Panc1 (cell line): ENCODE measurements at regions of chr5 and their contacts with region 1.

Region 1: DNA sequence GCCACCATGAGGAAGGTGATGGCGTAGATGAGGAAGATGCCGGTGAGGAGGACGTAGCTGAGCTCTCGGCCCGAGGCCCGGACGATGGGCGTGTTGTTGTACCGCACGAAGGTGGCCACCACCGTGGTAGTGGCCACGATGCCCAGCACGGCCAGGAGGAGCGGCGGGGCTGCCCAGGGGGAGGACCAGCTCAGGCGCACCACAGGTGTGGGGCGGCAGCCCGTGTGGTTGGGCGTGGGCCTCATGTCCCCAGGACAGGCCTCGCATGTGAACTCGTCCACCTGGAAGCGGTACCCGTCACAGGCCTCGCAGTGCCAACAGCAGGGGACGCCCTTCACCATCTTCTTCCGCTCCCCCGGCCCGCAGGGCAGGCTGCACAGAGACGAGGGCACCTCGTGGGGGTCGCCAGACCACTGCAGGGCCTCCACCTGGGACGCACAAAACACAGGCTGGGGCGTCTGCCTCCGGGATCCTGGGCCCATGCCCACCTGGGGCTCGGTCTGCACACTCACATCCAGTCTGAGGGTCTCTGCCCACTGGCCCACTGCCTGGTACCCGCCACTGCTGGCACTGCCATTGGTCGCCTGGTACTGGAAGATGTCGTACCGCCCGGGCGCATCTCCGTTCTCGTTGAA is 8.7 kb downstream of the GRM6 start:
- DNase-seq: no peak
- ATAC-seq: no peak
- H3K4me3 ChIP-seq: no peak overlapping the region
- H3K27ac ChIP-seq: no peak overlapping the region
- H3K4me1 ChIP-seq: no peaks in the 10 kb centered on the region
- H3K27me3 ChIP-seq: no peaks in the 10 kb centered on the region
- CTCF ChIP-seq: no peak

Region 2: DNA sequence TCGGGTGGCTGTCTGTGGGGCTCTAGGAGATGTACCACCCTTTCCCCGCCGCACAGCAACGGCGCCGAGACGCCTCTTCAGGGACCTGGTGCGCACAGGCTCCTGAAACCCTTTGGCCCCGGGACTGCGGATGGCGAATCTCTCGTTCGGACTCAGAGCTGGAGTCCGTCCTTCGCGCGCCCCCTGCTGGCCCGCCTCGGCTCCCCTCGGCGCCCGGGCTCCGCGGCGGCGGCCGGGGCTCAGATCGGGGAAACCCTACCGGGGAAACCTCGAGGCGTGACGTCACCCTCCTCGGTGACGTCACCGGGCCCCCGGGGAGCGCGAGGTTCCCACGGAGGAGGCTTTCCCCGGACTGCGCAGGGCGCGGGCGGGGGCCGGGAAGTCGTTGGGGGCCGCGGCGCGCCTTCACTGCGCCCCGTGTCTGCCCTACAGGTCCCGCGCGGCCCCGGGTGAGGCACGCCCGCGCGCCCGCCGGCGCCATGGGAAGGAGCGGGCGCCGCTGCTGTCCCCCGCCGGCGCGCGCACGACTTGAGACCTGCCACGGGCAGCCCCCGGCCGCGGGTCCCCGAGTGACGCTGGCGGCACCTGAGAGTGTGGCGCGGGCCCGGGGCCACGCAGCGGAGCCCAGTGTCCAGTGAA is 1531.9 kb before region 1 on chr5:
- CTCF ChIA-PET with region 1: no interaction called
- POLR2A ChIA-PET with region 1: interaction called, 15 read pairs
- in situ Hi-C with region 1: no loop called
- intact Hi-C with region 1: no loop called
- DNase-seq: peak; percentile 57
- ATAC-seq: peak; percentile 68
- H3K4me3 ChIP-seq: peak overlapping the region; percentile 50 to 61
- H3K27ac ChIP-seq: peak overlapping the region; percentile 78; the same call in 1 of the 2 replicates
- H3K4me1 ChIP-seq: peaks cover 41% of the 10 kb centered on the region
- H3K27me3 ChIP-seq: no peaks in the 10 kb centered on the region
- CTCF ChIP-seq: peak; percentile 95

Region 3: DNA sequence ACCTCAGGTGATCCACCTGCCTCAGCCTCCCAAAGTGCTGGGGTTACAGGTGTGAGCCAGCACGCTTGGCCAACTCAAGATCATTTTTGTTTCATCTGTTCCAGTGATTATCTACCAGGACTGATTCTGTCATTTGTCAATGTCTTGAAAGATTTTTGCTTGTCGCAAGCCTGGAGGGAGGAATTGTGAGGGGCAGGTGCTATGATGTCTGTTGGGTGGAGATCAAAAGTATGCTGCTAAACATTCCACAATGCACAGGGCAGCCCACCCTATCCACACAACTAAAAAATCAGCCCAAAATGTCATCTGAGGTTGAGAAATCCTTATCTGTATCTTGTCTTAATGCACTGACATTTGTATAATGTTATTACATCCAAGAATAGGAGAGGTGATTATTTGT is 105.4 kb before region 1 on chr5:
- CTCF ChIA-PET with region 1: interaction called, 10 read pairs
- POLR2A ChIA-PET with region 1: no interaction called
- in situ Hi-C with region 1: no loop called
- intact Hi-C with region 1: no loop called
- DNase-seq: no peak
- ATAC-seq: no peak
- H3K4me3 ChIP-seq: no peak overlapping the region
- H3K27ac ChIP-seq: no peak overlapping the region
- H3K4me1 ChIP-seq: no peaks in the 10 kb centered on the region
- H3K27me3 ChIP-seq: no peaks in the 10 kb centered on the region
- CTCF ChIP-seq: no peak

Region 4: GRCh38 chr5:179166886-179167841 is 180.7 kb after region 1 on chr5:
- CTCF ChIA-PET with region 1: interaction called, 10 read pairs
- POLR2A ChIA-PET with region 1: no interaction called
- in situ Hi-C with region 1: no loop called
- intact Hi-C with region 1: no loop called
- DNase-seq: no peak
- ATAC-seq: peak; percentile 87
- H3K4me3 ChIP-seq: no peak overlapping the region; a peak in 1 of 4 replicates
- H3K27ac ChIP-seq: no peak overlapping the region
- H3K4me1 ChIP-seq: no peaks in the 10 kb centered on the region
- H3K27me3 ChIP-seq: no peaks in the 10 kb centered on the region
- CTCF ChIP-seq: peak; percentile 98